WTC11 (cell line): ENCODE measurements at regions of chr5 and their contacts with region 1.

Region 1: GRCh38 chr5:10856683-10857337 is 95.8 kb upstream of the DAP start:
- DNase-seq: peak; percentile 87
- ATAC-seq: peak; percentile 89
- H3K4me3 Mint-ChIP-seq: peak overlapping the region; percentile 47
- H3K27ac Mint-ChIP-seq: peak overlapping the region; percentile 72; the same call in 1 of the 2 replicates
- H3K4me1 Mint-ChIP-seq: peaks cover 32% of the 10 kb centered on the region
- H3K27me3 Mint-ChIP-seq: peaks cover 26% of the 10 kb centered on the region
- CTCF ChIP-seq: peak; percentile 74

Region 2: DNA sequence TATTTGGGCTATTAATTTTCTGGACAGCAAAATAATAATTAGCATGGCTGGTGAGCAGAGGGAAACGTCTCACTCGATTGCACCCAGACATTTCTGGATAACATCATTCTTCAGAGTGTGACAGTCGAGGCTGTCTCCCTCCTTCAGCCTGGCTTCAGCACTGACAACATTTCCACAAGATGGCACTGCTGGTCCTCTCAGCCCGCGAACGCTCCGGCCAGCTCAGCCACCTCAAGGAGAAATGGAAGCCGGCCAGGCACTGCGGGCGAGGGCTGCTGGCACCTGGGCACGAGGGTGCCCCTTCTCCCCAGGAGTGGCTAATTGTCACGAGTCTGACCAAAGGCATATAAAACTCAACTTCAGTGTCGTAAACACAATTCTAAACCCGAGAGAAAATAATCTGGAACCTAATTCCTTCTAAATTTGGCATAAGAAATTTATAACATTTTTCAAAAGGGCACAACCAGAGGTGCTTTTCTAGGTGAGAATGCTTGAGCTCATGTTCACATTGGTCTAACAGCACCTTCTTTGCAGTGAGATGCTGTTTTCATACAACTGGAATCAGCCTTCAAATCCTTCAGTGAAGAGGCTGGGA is 161.7 kb before region 1 on chr5:
- CTCF ChIA-PET with region 1: interaction called, 11 read pairs
- POLR2A ChIA-PET with region 1: interaction called, 3 read pairs
- DNase-seq: peak; percentile 67
- ATAC-seq: peak; percentile 93
- H3K4me3 Mint-ChIP-seq: no peak overlapping the region
- H3K27ac Mint-ChIP-seq: no peak overlapping the region
- H3K4me1 Mint-ChIP-seq: peaks cover 24% of the 10 kb centered on the region
- H3K27me3 Mint-ChIP-seq: no peaks in the 10 kb centered on the region
- CTCF ChIP-seq: peak; percentile 20; the same call in 1 of the 2 replicates

Region 3: DNA sequence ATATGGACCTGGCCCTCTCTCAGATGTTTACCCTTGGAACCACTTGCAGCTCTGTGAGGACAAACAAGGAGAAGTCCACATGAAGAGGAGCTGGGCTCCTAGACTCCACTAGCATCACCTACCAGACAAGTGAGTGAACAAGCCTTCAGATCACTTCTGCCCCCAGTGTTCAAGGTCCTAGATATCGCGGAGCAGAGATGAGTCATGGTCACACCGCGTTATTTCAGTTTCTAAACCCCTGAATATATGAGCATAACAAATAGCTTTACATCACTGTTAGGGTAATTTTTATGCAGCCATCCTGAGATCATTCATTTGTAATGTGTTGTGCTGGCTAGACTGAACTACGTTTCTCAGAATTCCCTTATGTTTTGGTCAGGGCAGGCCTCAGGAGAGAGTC is 18.8 kb before region 1 on chr5:
- CTCF ChIA-PET with region 1: interaction called, 11 read pairs
- POLR2A ChIA-PET with region 1: no interaction called
- DNase-seq: no peak
- ATAC-seq: no peak
- H3K4me3 Mint-ChIP-seq: no peak overlapping the region
- H3K27ac Mint-ChIP-seq: no peak overlapping the region
- H3K4me1 Mint-ChIP-seq: no peaks in the 10 kb centered on the region
- H3K27me3 Mint-ChIP-seq: no peaks in the 10 kb centered on the region
- CTCF ChIP-seq: no peak

Region 4: DNA sequence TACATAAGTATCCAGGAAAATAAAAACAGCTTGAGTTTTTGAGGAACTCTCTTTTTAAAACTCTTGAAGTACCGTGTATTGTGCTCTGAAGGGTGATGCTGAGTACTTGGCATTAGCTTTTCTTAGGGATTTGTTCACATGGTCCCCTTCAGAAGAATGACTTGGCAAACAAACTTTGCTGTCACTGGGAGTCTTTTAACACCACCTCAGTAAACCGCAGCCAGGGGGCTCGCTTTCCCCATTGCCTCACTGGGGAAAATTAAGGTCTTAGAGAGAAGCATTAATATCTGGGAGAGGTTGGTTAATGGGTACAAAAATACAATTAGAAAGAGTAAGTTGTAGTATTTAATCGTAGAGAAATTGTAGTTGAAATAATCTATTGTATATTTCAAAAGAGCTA is 10.1 kb after region 1 on chr5:
- CTCF ChIA-PET with region 1: interaction called, 38 read pairs
- POLR2A ChIA-PET with region 1: no interaction called
- DNase-seq: no peak
- ATAC-seq: peak; percentile 61
- H3K4me3 Mint-ChIP-seq: no peak overlapping the region
- H3K27ac Mint-ChIP-seq: no peak overlapping the region
- H3K4me1 Mint-ChIP-seq: peaks cover 7% of the 10 kb centered on the region
- H3K27me3 Mint-ChIP-seq: no peaks in the 10 kb centered on the region; the same call in 1 of the 2 replicates
- CTCF ChIP-seq: no peak